Naive thymus-derived CD4-positive, alpha-beta T cell (primary cell): ENCODE measurements at regions of chr20 and their contacts with region 1.

Region 1: DNA sequence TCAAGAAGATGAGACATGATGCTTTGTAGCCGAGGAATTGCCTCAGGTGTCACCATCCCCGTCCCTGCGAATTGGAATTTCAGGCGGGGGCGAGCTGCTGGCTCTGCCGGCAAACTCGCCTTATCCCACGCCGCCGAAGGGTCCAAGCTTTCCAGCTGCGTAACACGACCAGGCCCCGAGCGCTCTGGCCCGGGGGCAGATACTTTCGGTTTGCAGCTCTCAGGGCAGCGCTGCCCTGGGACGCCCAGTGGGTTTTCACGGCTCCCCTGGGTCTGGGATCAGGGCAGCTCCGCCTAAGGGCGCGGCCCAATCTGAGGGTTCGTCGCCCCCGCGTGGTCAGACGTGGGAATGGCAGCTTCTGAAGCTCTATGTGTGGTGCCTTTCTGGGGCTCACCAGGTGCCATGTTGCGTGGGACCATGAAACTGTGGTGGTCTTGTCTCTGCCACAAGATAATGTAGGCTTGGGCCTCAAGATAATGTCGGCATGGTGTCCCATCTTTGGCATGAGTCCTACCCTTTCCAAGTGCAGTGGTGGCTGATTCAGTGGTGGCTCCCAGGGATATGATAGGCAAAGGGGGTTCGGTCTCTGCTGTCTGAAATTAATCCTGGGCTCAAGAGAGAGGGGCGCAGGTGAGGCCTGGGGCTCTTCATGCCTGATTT is 20.9 kb downstream of the PIGT start:
- DNase-seq: peak; percentile 70 to 89 (median 80)
- ATAC-seq: peak; percentile 100
- H3K4me3 ChIP-seq: peak overlapping the region; percentile 65
- H3K4me3 Mint-ChIP-seq: peak overlapping the region; percentile 71 to 86 (median 81)
- H3K27ac ChIP-seq: peak overlapping the region; percentile 50
- H3K27ac Mint-ChIP-seq: peak overlapping the region in 6 of 9 donors; percentile 31 to 84 (median 64)
- H3K4me1 ChIP-seq: peaks cover 5 to 11% of the 10 kb centered on the region in 2 donors
- H3K4me1 Mint-ChIP-seq: peaks cover 0 to 24% (median 14%) of the 10 kb centered on the region in 7 donors
- H3K27me3 ChIP-seq: no peaks in the 10 kb centered on the region
- H3K27me3 Mint-ChIP-seq: no peaks in the 10 kb centered on the region

Region 2: DNA sequence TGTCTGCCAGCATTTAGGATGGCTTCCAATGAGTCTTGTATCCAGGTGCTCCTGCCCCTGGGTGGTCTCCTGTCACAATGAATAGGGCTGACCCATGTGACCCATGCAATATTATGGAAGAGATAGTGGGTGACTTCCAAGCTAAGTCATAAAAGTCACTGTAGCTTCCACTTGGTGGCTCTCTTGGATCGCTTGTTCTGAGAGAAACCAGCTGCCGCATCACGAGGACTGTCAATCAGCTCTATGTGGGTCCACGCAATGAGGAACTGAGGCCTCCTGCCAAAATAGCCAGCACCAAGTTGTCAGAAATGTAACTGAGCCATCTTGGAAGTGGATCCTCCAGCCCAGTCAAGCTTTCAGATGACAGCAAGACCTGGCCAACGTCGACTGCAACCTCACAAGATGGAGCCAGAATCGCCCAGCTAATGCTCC is 113.9 kb before region 1 on chr20:
- CTCF ChIA-PET with region 1: interaction called, 43 read pairs
- POLR2A ChIA-PET with region 1: interaction called, 6 read pairs
- intact Hi-C with region 1: loop called (anchors 1 kb)
- DNase-seq: no peak
- ATAC-seq: peak; percentile 34
- H3K4me3 ChIP-seq: no peak overlapping the region
- H3K4me3 Mint-ChIP-seq: no peak overlapping the region
- H3K27ac ChIP-seq: no peak overlapping the region
- H3K27ac Mint-ChIP-seq: no peak overlapping the region
- H3K4me1 ChIP-seq: peaks cover 15 to 16% of the 10 kb centered on the region in 2 donors
- H3K4me1 Mint-ChIP-seq: peaks cover 10 to 42% (median 26%) of the 10 kb centered on the region in 7 donors
- H3K27me3 ChIP-seq: no peaks in the 10 kb centered on the region
- H3K27me3 Mint-ChIP-seq: no peaks in the 10 kb centered on the region

Region 3: GRCh38 chr20:45368221-45368980 is 68.5 kb before region 1 on chr20:
- CTCF ChIA-PET with region 1: interaction called, 146 read pairs
- POLR2A ChIA-PET with region 1: interaction called, 55 read pairs
- intact Hi-C with region 1: loop called (anchors 1 kb)
- DNase-seq: peak in 7 of 9 donors; percentile 37 to 60 (median 54)
- ATAC-seq: peak; percentile 60
- H3K4me3 ChIP-seq: no peak overlapping the region
- H3K4me3 Mint-ChIP-seq: peak overlapping the region; percentile 27 to 83 (median 60)
- H3K27ac ChIP-seq: peak overlapping the region; percentile 43
- H3K27ac Mint-ChIP-seq: peak overlapping the region; percentile 51 to 90 (median 79)
- H3K4me1 ChIP-seq: peaks cover 47 to 56% of the 10 kb centered on the region in 2 donors
- H3K4me1 Mint-ChIP-seq: peaks cover 47 to 84% (median 77%) of the 10 kb centered on the region in 7 donors
- H3K27me3 ChIP-seq: no peaks in the 10 kb centered on the region
- H3K27me3 Mint-ChIP-seq: no peaks in the 10 kb centered on the region

Region 4: GRCh38 chr20:45373353-45374100 is 63.3 kb before region 1 on chr20:
- CTCF ChIA-PET with region 1: interaction called, 114 read pairs
- POLR2A ChIA-PET with region 1: interaction called, 45 read pairs
- intact Hi-C with region 1: loop called (anchors 1 kb)
- DNase-seq: peak; percentile 81 to 90 (median 89)
- ATAC-seq: peak; percentile 94
- H3K4me3 ChIP-seq: peak overlapping the region; percentile 74
- H3K4me3 Mint-ChIP-seq: peak overlapping the region; percentile 84 to 94 (median 90)
- H3K27ac ChIP-seq: peak overlapping the region; percentile 77
- H3K27ac Mint-ChIP-seq: peak overlapping the region; percentile 87 to 97 (median 96)
- H3K4me1 ChIP-seq: peaks cover 13 to 29% of the 10 kb centered on the region in 2 donors
- H3K4me1 Mint-ChIP-seq: peaks cover 18 to 48% (median 46%) of the 10 kb centered on the region in 7 donors
- H3K27me3 ChIP-seq: no peaks in the 10 kb centered on the region
- H3K27me3 Mint-ChIP-seq: no peaks in the 10 kb centered on the region

Region 5: DNA sequence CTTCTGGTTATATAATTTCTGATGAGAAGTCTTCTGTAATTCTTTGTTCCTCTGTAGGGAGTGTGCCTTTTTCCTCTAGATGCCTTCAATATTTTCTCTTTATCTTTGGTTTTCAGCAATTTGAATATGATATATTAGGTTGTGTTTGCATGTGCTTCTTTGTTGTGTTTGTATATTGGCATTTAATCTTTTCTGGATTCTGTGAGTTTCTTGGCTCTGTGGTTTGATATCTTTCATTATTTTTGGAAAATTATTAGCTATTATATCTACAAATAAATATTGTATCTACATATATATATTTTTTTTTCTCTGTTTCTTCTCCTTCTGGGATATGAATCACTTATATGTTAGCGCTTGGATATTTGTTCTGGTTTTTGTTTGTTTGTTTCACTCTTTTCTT is 37.8 kb before region 1 on chr20:
- CTCF ChIA-PET with region 1: no interaction called
- POLR2A ChIA-PET with region 1: no interaction called
- intact Hi-C with region 1: no loop called
- DNase-seq: no peak
- ATAC-seq: no peak
- H3K4me3 ChIP-seq: no peak overlapping the region
- H3K4me3 Mint-ChIP-seq: no peak overlapping the region
- H3K27ac ChIP-seq: no peak overlapping the region
- H3K27ac Mint-ChIP-seq: no peak overlapping the region
- H3K4me1 ChIP-seq: no peaks in the 10 kb centered on the region
- H3K4me1 Mint-ChIP-seq: no peaks in the 10 kb centered on the region
- H3K27me3 ChIP-seq: no peaks in the 10 kb centered on the region
- H3K27me3 Mint-ChIP-seq: peaks cover 0 to 2% (median 0%) of the 10 kb centered on the region in 5 donors

Region 6: GRCh38 chr20:45450097-45450818 is 13.4 kb after region 1 on chr20:
- CTCF ChIA-PET with region 1: interaction called, 25 read pairs
- POLR2A ChIA-PET with region 1: interaction called, 3 read pairs
- intact Hi-C with region 1: no loop called
- DNase-seq: peak in 6 of 9 donors; percentile 19 to 51 (median 38)
- ATAC-seq: peak; percentile 76
- H3K4me3 ChIP-seq: no peak overlapping the region
- H3K4me3 Mint-ChIP-seq: no peak overlapping the region
- H3K27ac ChIP-seq: no peak overlapping the region
- H3K27ac Mint-ChIP-seq: no peak overlapping the region
- H3K4me1 ChIP-seq: no peaks in the 10 kb centered on the region
- H3K4me1 Mint-ChIP-seq: peaks cover 0 to 19% (median 8%) of the 10 kb centered on the region in 7 donors
- H3K27me3 ChIP-seq: peaks cover 0 to 6% of the 10 kb centered on the region in 2 donors
- H3K27me3 Mint-ChIP-seq: peaks cover 0 to 31% (median 3%) of the 10 kb centered on the region in 5 donors